GM12878 (cell line): ENCODE measurements at regions of chr10 and their contacts with region 1.

Region 1: DNA sequence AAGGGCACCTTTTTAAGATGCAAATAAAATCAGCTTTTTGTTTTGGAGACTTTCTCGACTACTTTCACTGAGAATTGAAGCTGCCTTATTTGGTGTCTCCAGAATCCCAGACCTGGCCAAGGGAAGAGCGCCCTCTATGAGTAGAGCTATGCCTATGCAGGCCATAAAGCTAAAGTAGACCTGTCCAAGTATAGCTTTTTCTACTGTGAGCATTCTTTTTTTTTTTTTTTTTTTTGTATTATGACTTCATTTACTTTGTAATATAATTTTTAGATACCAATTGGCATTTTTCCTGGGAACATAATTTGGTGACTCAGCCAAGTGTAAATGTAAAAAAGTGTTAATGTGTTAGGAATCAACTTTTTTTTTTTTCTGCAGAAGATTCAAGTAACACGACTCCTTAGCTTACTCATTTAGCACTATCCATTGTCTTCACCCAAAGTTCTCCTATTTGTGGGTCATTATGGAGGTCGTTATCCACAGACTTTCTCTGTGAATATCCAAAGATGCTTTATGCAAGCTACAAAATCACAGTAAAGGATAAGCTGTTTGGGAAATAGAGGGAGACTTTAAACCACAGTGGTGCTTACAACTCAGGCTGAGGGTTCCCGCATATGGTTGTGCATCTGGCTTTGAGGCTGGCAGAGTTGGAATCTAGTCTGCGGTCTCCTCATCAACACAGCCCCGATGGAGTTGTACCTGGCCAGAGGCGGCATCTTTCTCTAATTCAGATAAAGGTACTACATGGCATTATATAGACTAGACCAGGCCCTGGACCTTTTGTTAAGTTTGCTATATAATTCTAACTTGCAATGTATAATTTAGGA is 1040.2 kb upstream of the SORCS1 start:
- DNase-seq: peak; percentile 11
- ATAC-seq: peak; percentile 95
- H3K4me3 ChIP-seq: no peak overlapping the region
- H3K27ac ChIP-seq: no peak overlapping the region
- H3K4me1 ChIP-seq: no peaks in the 10 kb centered on the region
- H3K27me3 ChIP-seq: no peaks in the 10 kb centered on the region
- CTCF ChIP-seq: peak; percentile 72 to 85 (median 80)
- EP300 ChIP-seq: no peak
- POLR2A ChIP-seq: no peak
- RAD21 ChIP-seq: peak; percentile 90

Region 2: GRCh38 chr10:107814865-107815487 is 389.7 kb before region 1 on chr10:
- CTCF ChIA-PET with region 1: interaction called, 52 read pairs
- POLR2A ChIA-PET with region 1: no interaction called
- RAD21 ChIA-PET with region 1: interaction called, 40 read pairs
- SMC1A ChIA-PET with region 1: interaction called, 52 read pairs
- in situ Hi-C with region 1: no loop called
- intact Hi-C with region 1: loop called (anchors 10 kb)
- DNase-seq: peak; percentile 20
- ATAC-seq: peak; percentile 95
- H3K4me3 ChIP-seq: no peak overlapping the region
- H3K27ac ChIP-seq: no peak overlapping the region
- H3K4me1 ChIP-seq: no peaks in the 10 kb centered on the region
- H3K27me3 ChIP-seq: no peaks in the 10 kb centered on the region
- CTCF ChIP-seq: peak; percentile 59 to 81 (median 74)
- EP300 ChIP-seq: no peak
- POLR2A ChIP-seq: no peak
- RAD21 ChIP-seq: peak; percentile 87

Region 3: GRCh38 chr10:107894516-107894915 is 310.2 kb before region 1 on chr10:
- CTCF ChIA-PET with region 1: interaction called, 4 read pairs
- POLR2A ChIA-PET with region 1: no interaction called
- RAD21 ChIA-PET with region 1: interaction called, 3 read pairs
- SMC1A ChIA-PET with region 1: interaction called, 13 read pairs
- in situ Hi-C with region 1: no loop called
- intact Hi-C with region 1: no loop called
- DNase-seq: no peak
- ATAC-seq: peak; percentile 97
- H3K4me3 ChIP-seq: no peak overlapping the region
- H3K27ac ChIP-seq: no peak overlapping the region
- H3K4me1 ChIP-seq: no peaks in the 10 kb centered on the region
- H3K27me3 ChIP-seq: no peaks in the 10 kb centered on the region
- CTCF ChIP-seq: no peak
- EP300 ChIP-seq: no peak
- POLR2A ChIP-seq: no peak
- RAD21 ChIP-seq: no peak

Region 4: DNA sequence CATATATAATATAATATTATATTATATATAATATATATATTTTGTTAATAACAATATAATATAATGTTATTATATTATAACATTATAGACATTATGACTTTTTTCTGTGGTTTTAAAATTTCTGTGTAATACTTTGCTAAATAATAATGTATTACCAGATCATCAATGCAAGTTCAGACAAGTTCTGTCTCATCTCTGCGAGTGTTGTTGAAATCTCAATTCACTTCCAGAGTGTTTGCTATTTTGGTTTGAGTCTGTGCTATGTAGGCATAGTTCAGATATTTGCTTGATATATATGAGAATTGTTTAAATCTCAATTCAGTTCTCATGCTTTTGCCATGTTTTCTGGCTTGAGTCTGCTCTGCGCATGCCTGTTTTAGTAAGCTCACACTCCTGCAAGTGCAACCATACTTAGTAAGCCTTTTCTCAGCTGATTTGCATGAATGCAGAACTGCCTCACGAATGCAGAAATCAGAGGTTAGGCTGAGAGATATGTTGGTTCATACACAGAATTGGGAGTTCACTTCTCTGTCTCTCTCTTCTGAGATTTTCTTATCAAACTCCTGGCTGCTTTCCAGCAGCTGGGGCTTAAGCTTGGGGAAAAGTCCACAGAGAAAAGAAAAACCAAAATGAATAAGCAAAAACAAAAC is 209.9 kb before region 1 on chr10:
- CTCF ChIA-PET with region 1: interaction called, 5 read pairs
- POLR2A ChIA-PET with region 1: no interaction called
- RAD21 ChIA-PET with region 1: interaction called, 7 read pairs
- SMC1A ChIA-PET with region 1: interaction called, 9 read pairs
- in situ Hi-C with region 1: no loop called
- intact Hi-C with region 1: loop called (anchors 5 kb)
- DNase-seq: no peak
- ATAC-seq: peak; percentile 75
- H3K4me3 ChIP-seq: peak overlapping the region; percentile 0; the same call in 1 of the 2 replicates
- H3K27ac ChIP-seq: peak overlapping the region; percentile 20; the same call in 1 of the 2 replicates
- H3K4me1 ChIP-seq: no peaks in the 10 kb centered on the region
- H3K27me3 ChIP-seq: no peaks in the 10 kb centered on the region
- CTCF ChIP-seq: no peak
- EP300 ChIP-seq: no peak
- POLR2A ChIP-seq: no peak
- RAD21 ChIP-seq: no peak

Region 5: GRCh38 chr10:108052981-108053380 is 151.7 kb before region 1 on chr10:
- CTCF ChIA-PET with region 1: interaction called, 15 read pairs
- POLR2A ChIA-PET with region 1: no interaction called
- RAD21 ChIA-PET with region 1: interaction called, 9 read pairs
- SMC1A ChIA-PET with region 1: interaction called, 12 read pairs
- in situ Hi-C with region 1: no loop called
- intact Hi-C with region 1: no loop called
- DNase-seq: no peak
- ATAC-seq: peak; percentile 37
- H3K4me3 ChIP-seq: no peak overlapping the region
- H3K27ac ChIP-seq: no peak overlapping the region
- H3K4me1 ChIP-seq: no peaks in the 10 kb centered on the region
- H3K27me3 ChIP-seq: no peaks in the 10 kb centered on the region
- CTCF ChIP-seq: no peak
- EP300 ChIP-seq: no peak
- POLR2A ChIP-seq: no peak
- RAD21 ChIP-seq: no peak

Region 6: GRCh38 chr10:108338146-108338545 is 133.5 kb after region 1 on chr10:
- CTCF ChIA-PET with region 1: no interaction called
- POLR2A ChIA-PET with region 1: no interaction called
- RAD21 ChIA-PET with region 1: no interaction called
- SMC1A ChIA-PET with region 1: no interaction called
- in situ Hi-C with region 1: no loop called
- intact Hi-C with region 1: no loop called
- DNase-seq: no peak
- ATAC-seq: no peak
- H3K4me3 ChIP-seq: no peak overlapping the region
- H3K27ac ChIP-seq: no peak overlapping the region
- H3K4me1 ChIP-seq: no peaks in the 10 kb centered on the region
- H3K27me3 ChIP-seq: no peaks in the 10 kb centered on the region
- CTCF ChIP-seq: no peak
- EP300 ChIP-seq: no peak
- POLR2A ChIP-seq: no peak
- RAD21 ChIP-seq: no peak

Region 7: DNA sequence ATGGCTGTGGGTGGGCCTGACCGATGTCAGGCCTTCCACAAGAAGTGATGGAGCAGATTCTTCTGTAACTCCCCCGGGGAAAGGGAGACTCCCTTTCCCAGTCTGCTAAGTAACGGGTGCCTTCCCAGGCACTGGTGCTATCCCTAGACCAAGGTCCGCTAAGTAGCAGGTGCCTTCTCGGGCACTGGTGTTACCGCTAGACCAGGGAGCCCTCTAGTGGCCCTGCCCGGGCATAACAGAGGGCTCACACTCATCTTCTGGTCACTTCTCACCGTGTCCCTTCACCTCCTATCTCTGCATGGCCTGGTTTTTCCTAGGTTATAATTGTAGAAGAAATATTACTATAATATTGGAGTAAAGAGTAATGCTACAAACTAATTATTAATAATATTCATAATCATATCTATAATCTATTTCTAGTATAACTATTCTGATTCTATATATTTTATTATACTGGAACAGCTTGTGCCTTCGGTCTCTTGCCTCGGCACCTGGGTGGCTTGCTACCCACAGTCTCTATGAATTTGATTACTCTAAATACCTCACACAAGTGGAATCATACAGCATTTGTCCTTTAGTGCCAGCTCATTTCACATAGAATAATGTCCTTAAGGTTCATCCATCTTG is 339.9 kb after region 1 on chr10:
- CTCF ChIA-PET with region 1: interaction called, 8 read pairs
- POLR2A ChIA-PET with region 1: no interaction called
- RAD21 ChIA-PET with region 1: no interaction called
- SMC1A ChIA-PET with region 1: interaction called, 5 read pairs
- in situ Hi-C with region 1: no loop called
- intact Hi-C with region 1: loop called (anchors 5 kb)
- DNase-seq: no peak
- ATAC-seq: peak; percentile 90
- H3K4me3 ChIP-seq: no peak overlapping the region
- H3K27ac ChIP-seq: no peak overlapping the region
- H3K4me1 ChIP-seq: no peaks in the 10 kb centered on the region; the same call in 1 of the 2 replicates
- H3K27me3 ChIP-seq: no peaks in the 10 kb centered on the region
- CTCF ChIP-seq: peak; percentile 79 to 97 (median 92)
- EP300 ChIP-seq: no peak
- POLR2A ChIP-seq: no peak
- RAD21 ChIP-seq: peak; percentile 90